Right lobe of liver (tissue), 6 donors: ENCODE measurements at regions of chr18 and their contacts with region 1.

Region 1: DNA sequence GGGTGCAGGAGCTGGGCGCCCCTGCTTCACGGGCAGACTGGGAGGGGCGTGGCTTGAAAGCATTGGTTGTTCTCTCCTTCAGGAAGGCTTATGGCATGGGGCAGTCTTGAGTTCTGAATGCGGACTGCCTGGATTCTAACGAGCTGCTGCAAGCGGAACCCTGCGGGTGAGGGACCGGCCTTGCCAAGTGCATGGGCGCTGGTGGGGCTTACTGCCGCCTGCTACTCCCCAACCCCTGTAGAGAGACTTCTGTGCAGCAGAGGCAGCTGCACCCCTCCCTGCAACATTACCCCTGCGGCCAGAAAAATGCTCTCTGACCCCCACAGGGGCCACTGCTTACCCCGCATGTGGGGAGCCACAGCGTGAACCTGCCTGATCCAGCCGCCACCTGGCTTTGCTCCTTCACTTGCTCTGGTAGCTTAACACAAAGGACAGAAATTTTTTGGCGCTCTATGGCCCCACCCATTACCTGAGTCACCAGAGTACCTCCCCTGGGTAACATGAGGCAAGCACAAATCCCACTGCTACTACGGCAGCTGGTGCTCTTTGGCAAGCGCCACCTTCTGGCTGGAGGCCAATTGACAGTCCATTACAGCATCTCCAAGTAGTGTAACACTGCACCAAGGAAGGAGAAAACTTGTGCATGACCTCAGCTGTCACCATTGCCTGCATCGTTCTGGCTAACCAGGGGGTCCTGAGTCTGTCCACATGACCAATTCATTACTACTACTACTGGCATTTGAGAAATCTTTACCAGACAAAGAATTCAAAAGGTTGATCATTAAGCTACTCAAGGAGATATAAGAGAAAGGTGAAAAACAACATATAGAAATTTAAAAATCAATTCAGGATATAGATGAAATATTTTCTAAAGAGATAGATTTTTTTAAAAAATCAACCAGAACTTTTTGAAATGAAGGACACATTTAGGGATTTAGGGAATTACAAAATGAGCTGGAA is 35.4 kb downstream of the MYL12B start:
- DNase-seq: peak; percentile 90 to 91 (median 91)
- ATAC-seq: peak; percentile 94 to 98 (median 95)
- H3K4me3 ChIP-seq: peak overlapping the region; percentile 49 to 76 (median 65)
- H3K27ac ChIP-seq: peak overlapping the region in 1 of 3 donors; percentile 42
- H3K4me1 ChIP-seq: peaks cover 0 to 5% (median 0%) of the 10 kb centered on the region in 4 donors
- H3K27me3 ChIP-seq: no peaks in the 10 kb centered on the region
- CTCF ChIP-seq: peak; percentile 13 to 64 (median 42)
- POLR2A ChIP-seq: peak; percentile 39

Region 2: DNA sequence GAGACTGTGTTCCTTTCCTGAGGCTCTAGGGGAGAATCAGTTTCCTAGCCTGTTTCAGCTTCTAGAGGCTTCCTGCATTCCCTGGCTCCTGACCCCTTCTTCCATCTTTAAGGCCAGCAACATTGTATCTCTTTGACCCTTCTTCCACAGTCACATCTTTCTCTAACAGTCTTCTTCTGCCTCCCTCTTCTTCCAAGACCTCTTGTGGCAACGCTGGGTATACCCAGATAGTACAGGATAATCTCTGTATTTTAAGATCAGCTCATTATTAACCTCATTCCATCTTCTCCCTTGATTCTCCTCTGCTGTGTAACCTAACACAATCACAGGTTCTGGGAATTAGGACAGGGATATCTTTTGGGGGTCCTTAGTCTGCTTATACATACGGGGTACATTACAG is 58.6 kb before region 1 on chr18:
- intact Hi-C with region 1: no loop called
- DNase-seq: no peak
- ATAC-seq: no peak
- H3K4me3 ChIP-seq: no peak overlapping the region
- H3K27ac ChIP-seq: no peak overlapping the region
- H3K4me1 ChIP-seq: peaks cover 0 to 10% (median 4%) of the 10 kb centered on the region in 4 donors
- H3K27me3 ChIP-seq: no peaks in the 10 kb centered on the region
- CTCF ChIP-seq: no peak
- POLR2A ChIP-seq: no peak

Region 3: DNA sequence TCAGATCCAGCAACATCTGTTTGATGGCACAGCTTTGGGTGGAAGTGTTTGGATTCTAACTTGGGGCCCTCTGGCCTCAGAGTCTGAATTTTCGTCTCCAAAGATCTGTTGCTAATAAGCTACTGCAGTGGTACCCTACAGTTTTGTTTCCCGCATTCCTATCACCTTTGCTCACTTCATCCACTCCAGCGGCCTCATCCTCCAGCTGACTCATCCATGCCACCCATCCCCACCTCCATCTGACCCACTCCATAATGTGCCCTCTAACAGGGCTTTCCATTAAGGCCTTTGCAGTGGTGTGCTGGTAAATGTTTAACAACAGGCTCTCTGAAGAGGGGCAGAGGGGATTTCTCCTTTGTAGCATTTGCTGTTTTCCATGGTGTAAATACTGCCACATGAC is 378.1 kb after region 1 on chr18:
- intact Hi-C with region 1: loop called in 1 of 2 experiments (anchors 10 kb)
- DNase-seq: no peak
- ATAC-seq: no peak
- H3K4me3 ChIP-seq: no peak overlapping the region
- H3K27ac ChIP-seq: no peak overlapping the region
- H3K4me1 ChIP-seq: no peaks in the 10 kb centered on the region
- H3K27me3 ChIP-seq: no peaks in the 10 kb centered on the region
- CTCF ChIP-seq: no peak
- POLR2A ChIP-seq: no peak